ENCODE measurements at regions of chr1 and their contacts with region 1.

Region 1: GRCh38 chr1:26744075-26744959 is 43.4 kb upstream of the PIGV start:
- DNase-seq: peak; percentile 99
- ATAC-seq: peak; percentile 100
- H3K4me3 ChIP-seq: peak overlapping the region; percentile 65; the same call in 1 of the 2 replicates
- H3K27ac ChIP-seq: peak overlapping the region; percentile 96
- H3K4me1 ChIP-seq: peaks cover 47% of the 10 kb centered on the region
- H3K27me3 ChIP-seq: no peaks in the 10 kb centered on the region
- CTCF ChIP-seq: no peak
- EP300 ChIP-seq: peak in 1 of 2 experiments; percentile 80; a peak in 1 of 4 replicates
- POLR2A ChIP-seq: peak; percentile 72
- RAD21 ChIP-seq: no peak; the same call in 1 of the 2 replicates

Region 2: DNA sequence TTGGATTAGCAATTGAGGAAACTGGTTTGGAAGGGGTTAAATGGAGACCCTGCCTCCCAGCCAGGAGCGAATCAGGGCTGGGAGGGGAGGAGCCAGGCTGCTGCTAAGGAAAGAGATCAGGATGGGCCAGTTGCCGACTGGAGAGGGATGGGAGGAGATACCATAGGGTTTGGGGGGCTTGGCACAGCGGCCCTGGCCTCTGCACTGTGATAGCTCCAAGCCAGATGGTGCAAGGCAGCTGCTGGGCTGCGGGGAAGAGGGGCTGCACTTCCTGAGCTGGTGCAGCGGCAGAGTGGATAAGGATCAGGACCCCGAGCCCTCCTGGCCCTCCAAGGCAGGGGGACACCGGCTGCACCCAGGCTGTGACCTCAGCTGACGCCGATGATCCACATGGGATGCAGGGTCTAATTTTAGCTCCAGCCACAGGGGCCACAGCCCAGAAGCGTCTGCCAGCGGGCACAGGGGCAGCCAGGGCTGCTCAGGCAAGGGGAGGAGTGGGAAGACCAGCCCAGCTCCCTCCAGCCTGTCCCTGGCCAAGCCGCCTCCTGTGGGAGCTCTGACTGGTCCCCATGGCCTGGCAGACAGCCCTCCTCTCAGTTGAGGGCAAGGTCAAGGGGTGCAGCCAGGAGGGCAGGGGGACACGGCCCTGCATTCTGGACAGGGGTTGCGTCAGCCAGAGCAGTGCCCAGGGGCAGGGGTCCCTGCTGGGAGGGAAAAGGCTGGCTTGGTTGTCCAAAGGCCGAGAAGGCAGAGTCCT is 722.5 kb before region 1 on chr1 and contains the start of gene EXTL1:
- CTCF ChIA-PET with region 1: no interaction called
- POLR2A ChIA-PET with region 1: no interaction called
- RAD21 ChIA-PET with region 1: no interaction called
- SMC1A ChIA-PET with region 1: no interaction called
- in situ Hi-C with region 1: no loop called
- intact Hi-C with region 1: no loop called
- DNase-seq: no peak
- ATAC-seq: no peak
- H3K4me3 ChIP-seq: no peak within 1 kb of the TSS
- H3K27ac ChIP-seq: no peak within 1 kb of the TSS
- H3K4me1 ChIP-seq: peaks cover 4% of the 10 kb centered on the region; the same call in 1 of the 2 replicates
- H3K27me3 ChIP-seq: no peaks in the 10 kb centered on the region; a peak in 3 of 4 replicates
- CTCF ChIP-seq: no peak
- EP300 ChIP-seq: no peak
- POLR2A ChIP-seq: no peak
- RAD21 ChIP-seq: no peak
- polyA plus RNA-seq, gene EXTL1: not detected

Region 3: DNA sequence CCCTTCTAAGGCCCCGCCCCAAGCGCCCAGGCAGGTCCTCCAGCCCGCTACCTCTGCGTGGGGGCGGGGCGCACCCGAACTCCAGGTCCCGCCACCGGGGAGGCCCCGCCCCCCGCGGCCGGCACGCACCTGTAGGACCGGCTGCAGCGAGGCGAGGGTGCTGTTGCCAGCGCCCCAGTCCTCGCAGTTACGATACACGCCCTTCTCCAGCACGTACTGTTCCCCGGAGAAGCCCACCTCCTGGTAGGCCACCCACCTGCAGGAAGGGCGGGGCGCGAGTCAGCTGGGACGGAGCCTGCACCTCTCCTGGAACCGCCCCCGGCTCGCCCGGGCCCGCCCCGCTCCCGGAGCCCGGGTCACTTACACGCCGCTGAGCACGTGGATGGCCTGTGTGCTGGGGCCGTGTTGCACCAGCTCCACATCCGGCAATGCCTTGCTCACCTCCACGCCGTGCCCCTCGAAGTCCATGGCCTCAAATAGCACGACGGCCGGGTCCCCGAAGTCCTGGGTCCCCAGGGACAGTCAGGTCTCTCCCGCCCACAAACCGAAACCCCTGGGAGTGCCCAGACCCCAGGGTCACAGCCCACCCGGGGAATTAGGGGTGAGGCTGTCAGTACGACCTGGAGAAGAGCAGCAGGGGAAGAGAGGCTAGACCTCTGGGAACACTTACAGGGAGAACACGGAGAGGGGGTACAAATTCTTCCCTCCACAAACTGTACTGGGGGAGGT is 407.7 kb before region 1 on chr1:
- CTCF ChIA-PET with region 1: no interaction called
- POLR2A ChIA-PET with region 1: no interaction called
- RAD21 ChIA-PET with region 1: no interaction called
- SMC1A ChIA-PET with region 1: no interaction called
- in situ Hi-C with region 1: no loop called
- intact Hi-C with region 1: no loop called
- DNase-seq: no peak
- ATAC-seq: peak; percentile 95
- H3K4me3 ChIP-seq: peak overlapping the region; percentile 68; the same call in 1 of the 2 replicates
- H3K27ac ChIP-seq: no peak overlapping the region
- H3K4me1 ChIP-seq: peaks cover 6% of the 10 kb centered on the region; the same call in 1 of the 2 replicates
- H3K27me3 ChIP-seq: peaks cover 0 to 6% of the 10 kb centered on the region in 2 experiments; a peak in 1 of 4 replicates
- CTCF ChIP-seq: no peak
- EP300 ChIP-seq: no peak
- POLR2A ChIP-seq: no peak
- RAD21 ChIP-seq: no peak

Region 4: GRCh38 chr1:26695356-26696118 is 48.8 kb before region 1 on chr1 and contains the start of gene ARID1A:
- CTCF ChIA-PET with region 1: interaction called, 30 read pairs
- POLR2A ChIA-PET with region 1: interaction called, 34 read pairs
- RAD21 ChIA-PET with region 1: interaction called, 34 read pairs
- SMC1A ChIA-PET with region 1: interaction called, 135 read pairs
- in situ Hi-C with region 1: no loop called
- intact Hi-C with region 1: loop called (anchors 5 kb)
- DNase-seq: peak; percentile 82
- ATAC-seq: peak; percentile 69
- H3K4me3 ChIP-seq: peak within 1 kb of the TSS; percentile 98
- H3K27ac ChIP-seq: peak within 1 kb of the TSS; percentile 98
- H3K4me1 ChIP-seq: peaks cover 13% of the 10 kb centered on the region
- H3K27me3 ChIP-seq: no peaks in the 10 kb centered on the region
- CTCF ChIP-seq: no peak
- EP300 ChIP-seq: peak in 1 of 2 experiments; percentile 74; a peak in 1 of 4 replicates
- POLR2A ChIP-seq: peak; percentile 97
- RAD21 ChIP-seq: peak; percentile 27; the same call in 1 of the 2 replicates
- polyA plus RNA-seq, gene ARID1A: 10.0 to 24.5 TPM

Region 5: DNA sequence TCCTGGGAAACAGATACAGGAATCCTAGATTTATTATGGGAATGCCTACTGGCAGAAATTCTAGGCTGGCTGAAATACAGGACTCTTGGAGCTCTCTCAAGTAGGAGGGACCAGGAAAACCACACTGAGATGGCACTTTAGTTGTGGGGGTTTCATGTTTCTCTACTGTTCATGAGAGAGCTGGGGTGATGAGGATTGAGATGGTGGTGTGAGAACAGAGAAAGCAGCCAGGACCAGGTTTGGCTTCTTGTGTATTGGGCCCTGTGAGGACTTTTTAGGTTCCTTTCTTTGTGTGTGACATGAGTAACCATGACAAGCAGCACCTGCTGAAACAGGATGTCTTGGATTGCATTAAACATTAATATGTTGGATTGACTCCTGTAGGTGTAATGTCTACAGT is 43.6 kb before region 1 on chr1:
- CTCF ChIA-PET with region 1: interaction called, 6 read pairs
- POLR2A ChIA-PET with region 1: interaction called, 34 read pairs
- RAD21 ChIA-PET with region 1: interaction called, 34 read pairs
- SMC1A ChIA-PET with region 1: interaction called, 135 read pairs
- in situ Hi-C with region 1: no loop called
- intact Hi-C with region 1: loop called (anchors 5 kb)
- DNase-seq: no peak
- ATAC-seq: peak; percentile 1
- H3K4me3 ChIP-seq: peak overlapping the region; percentile 98
- H3K27ac ChIP-seq: peak overlapping the region; percentile 65
- H3K4me1 ChIP-seq: peaks cover 8% of the 10 kb centered on the region
- H3K27me3 ChIP-seq: no peaks in the 10 kb centered on the region
- CTCF ChIP-seq: no peak
- EP300 ChIP-seq: no peak
- POLR2A ChIP-seq: no peak
- RAD21 ChIP-seq: no peak

Region 6: GRCh38 chr1:26705788-26706311 is 38.5 kb before region 1 on chr1:
- CTCF ChIA-PET with region 1: interaction called, 6 read pairs
- POLR2A ChIA-PET with region 1: interaction called, 34 read pairs
- RAD21 ChIA-PET with region 1: interaction called, 24 read pairs
- SMC1A ChIA-PET with region 1: interaction called, 135 read pairs
- in situ Hi-C with region 1: no loop called
- intact Hi-C with region 1: loop called (anchors 5 kb)
- DNase-seq: no peak
- ATAC-seq: no peak
- H3K4me3 ChIP-seq: peak overlapping the region; percentile 32; the same call in 1 of the 2 replicates
- H3K27ac ChIP-seq: peak overlapping the region; percentile 23; the same call in 1 of the 2 replicates
- H3K4me1 ChIP-seq: peaks cover 13% of the 10 kb centered on the region
- H3K27me3 ChIP-seq: no peaks in the 10 kb centered on the region
- CTCF ChIP-seq: no peak
- EP300 ChIP-seq: no peak
- POLR2A ChIP-seq: no peak
- RAD21 ChIP-seq: no peak

Region 7: GRCh38 chr1:26723013-26723991 is 21.0 kb before region 1 on chr1:
- CTCF ChIA-PET with region 1: interaction called, 19 read pairs
- POLR2A ChIA-PET with region 1: interaction called, 9 read pairs
- RAD21 ChIA-PET with region 1: interaction called, 6 read pairs
- SMC1A ChIA-PET with region 1: interaction called, 34 read pairs
- in situ Hi-C with region 1: no loop called
- intact Hi-C with region 1: no loop called
- DNase-seq: no peak
- ATAC-seq: peak; percentile 61
- H3K4me3 ChIP-seq: peak overlapping the region; percentile 49
- H3K27ac ChIP-seq: peak overlapping the region; percentile 72
- H3K4me1 ChIP-seq: peaks cover 53% of the 10 kb centered on the region
- H3K27me3 ChIP-seq: no peaks in the 10 kb centered on the region
- CTCF ChIP-seq: no peak
- EP300 ChIP-seq: no peak
- POLR2A ChIP-seq: 0 out of 2 replicates have a peak, but pooled peaks have one; percentile 36
- RAD21 ChIP-seq: no peak

Region 8: DNA sequence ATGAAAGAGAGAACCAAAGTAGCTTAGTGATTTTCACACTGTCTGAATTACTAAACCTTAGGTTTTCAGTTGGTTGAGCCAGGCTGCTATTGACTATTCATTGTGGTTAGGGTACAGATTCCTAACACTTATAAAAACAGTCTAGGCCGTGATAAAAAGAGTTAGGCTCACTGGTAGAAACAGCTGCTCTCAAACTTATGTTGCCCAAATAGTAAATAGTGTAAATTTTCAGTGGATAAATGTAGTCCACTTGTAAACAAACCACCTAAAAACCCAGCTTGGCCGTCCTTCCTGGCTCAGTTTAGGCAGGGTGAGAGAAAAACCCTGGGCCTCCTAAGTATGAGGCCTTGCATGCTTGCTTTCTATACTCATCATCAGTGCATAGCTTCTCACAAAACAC is 13.6 kb before region 1 on chr1:
- CTCF ChIA-PET with region 1: interaction called, 19 read pairs
- POLR2A ChIA-PET with region 1: interaction called, 9 read pairs
- RAD21 ChIA-PET with region 1: interaction called, 5 read pairs
- SMC1A ChIA-PET with region 1: interaction called, 34 read pairs
- in situ Hi-C with region 1: no loop called
- intact Hi-C with region 1: no loop called
- DNase-seq: no peak
- ATAC-seq: no peak
- H3K4me3 ChIP-seq: no peak overlapping the region
- H3K27ac ChIP-seq: no peak overlapping the region
- H3K4me1 ChIP-seq: peaks cover 17% of the 10 kb centered on the region
- H3K27me3 ChIP-seq: no peaks in the 10 kb centered on the region
- CTCF ChIP-seq: no peak
- EP300 ChIP-seq: no peak
- POLR2A ChIP-seq: no peak
- RAD21 ChIP-seq: no peak

Region 9: DNA sequence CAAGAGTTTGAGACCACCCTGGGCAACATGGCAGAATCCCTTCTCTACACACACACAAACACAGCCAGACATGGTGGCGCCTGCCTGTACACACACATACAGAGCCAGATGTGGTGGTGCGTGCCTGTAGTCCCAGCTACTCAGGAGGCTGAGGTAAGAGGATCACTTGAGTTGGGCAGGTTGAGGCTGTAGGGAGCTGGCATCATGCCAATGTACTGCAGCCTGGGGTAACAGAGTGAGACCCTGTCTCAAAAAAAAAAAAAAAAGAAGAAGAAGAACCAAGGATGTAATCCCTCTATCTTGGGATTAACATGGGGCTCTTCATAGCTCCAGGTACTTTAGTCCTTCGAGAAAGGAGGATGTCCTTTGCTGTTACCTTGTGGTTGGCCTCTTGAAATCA is 14.1 kb after region 1 on chr1:
- CTCF ChIA-PET with region 1: interaction called, 7 read pairs
- POLR2A ChIA-PET with region 1: interaction called, 13 read pairs
- RAD21 ChIA-PET with region 1: no interaction called
- SMC1A ChIA-PET with region 1: interaction called, 19 read pairs
- in situ Hi-C with region 1: no loop called
- intact Hi-C with region 1: no loop called
- DNase-seq: no peak
- ATAC-seq: no peak
- H3K4me3 ChIP-seq: no peak overlapping the region
- H3K27ac ChIP-seq: no peak overlapping the region
- H3K4me1 ChIP-seq: no peaks in the 10 kb centered on the region
- H3K27me3 ChIP-seq: no peaks in the 10 kb centered on the region
- CTCF ChIP-seq: no peak
- EP300 ChIP-seq: no peak
- POLR2A ChIP-seq: no peak
- RAD21 ChIP-seq: no peak